IMR-90 (cell line): ENCODE measurements at regions of chr9 and their contacts with region 1.

Region 1: DNA sequence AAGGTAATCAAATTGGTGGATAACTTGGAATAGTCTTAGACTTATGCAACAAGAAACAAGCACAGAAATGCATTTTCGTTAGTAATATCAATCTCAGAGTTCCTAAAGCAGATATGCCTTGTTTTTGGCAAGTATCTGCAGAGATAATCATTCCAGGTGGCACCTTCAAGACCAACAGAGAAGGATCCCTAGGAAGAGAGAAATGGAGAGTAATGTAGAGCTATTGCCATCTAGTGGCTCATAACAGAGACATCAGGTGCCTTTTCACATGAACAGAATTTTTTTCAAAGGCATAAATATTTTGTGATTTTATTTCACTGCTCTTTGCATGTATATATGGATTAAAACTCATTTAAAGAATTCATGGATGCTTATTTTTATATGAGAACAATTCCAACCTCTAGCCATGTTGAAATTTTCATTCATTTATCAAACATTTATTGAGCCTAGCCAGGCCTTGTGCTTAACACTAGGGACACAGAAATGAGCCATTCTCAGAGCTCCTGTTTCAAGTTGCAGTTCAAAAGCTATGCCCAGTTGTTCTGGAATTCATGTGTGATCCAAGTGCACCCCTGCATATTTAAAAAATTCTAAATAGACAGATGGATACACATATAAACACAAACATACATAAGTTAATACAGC is 117.5 kb upstream of the OR13F1 start:
- DNase-seq: peak; percentile 20
- ATAC-seq: no peak
- H3K4me3 ChIP-seq: no peak overlapping the region
- H3K27ac ChIP-seq: no peak overlapping the region
- H3K4me1 ChIP-seq: no peaks in the 10 kb centered on the region
- H3K27me3 ChIP-seq: no peaks in the 10 kb centered on the region
- CTCF ChIP-seq: peak; percentile 66
- POLR2A ChIP-seq: no peak
- RAD21 ChIP-seq: peak; percentile 68

Region 2: DNA sequence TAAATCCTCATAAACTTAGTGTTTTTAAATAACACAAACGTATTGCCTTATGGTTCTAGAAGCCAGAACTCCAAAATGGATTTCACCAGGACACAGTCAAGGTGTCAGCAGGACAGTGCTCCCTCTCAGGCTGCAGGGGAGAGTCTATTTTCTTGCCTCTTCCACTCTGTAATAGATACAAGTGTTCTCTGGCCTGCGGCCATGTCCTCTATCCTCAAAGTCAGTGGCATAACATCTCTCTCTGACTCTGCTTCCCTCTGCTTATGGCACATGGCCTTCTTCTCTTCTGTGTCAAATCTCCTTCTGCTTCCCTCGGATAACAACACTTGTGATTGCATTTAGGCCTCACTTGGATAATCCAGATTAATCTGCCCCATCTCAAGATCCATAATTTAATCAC is 11.8 kb before region 1 on chr9:
- CTCF ChIA-PET with region 1: no interaction called
- POLR2A ChIA-PET with region 1: no interaction called
- dilution Hi-C with region 1: no loop called
- in situ Hi-C with region 1: no loop called
- intact Hi-C with region 1: no loop called
- DNase-seq: no peak
- ATAC-seq: no peak
- H3K4me3 ChIP-seq: no peak overlapping the region
- H3K27ac ChIP-seq: no peak overlapping the region
- H3K4me1 ChIP-seq: no peaks in the 10 kb centered on the region
- H3K27me3 ChIP-seq: no peaks in the 10 kb centered on the region
- CTCF ChIP-seq: no peak
- POLR2A ChIP-seq: no peak
- RAD21 ChIP-seq: no peak

Region 3: DNA sequence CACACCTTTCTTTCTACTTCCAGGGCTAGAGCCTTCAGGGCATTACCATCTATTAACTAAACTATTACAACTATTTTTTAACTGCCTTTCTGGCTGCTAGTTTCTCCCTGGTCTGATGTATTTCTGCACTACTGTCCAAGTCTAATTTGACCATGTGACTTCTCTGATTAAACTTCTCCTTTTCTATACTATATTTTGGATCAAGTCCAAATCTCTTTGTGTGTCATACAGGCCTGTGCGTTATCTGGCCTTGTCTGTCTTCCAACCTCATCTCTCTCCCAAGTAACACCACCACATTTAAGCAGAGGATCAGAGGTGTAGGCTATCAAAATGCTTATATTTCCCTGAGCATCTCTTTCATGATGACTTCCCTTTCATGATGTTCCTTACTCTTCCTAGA is 70.3 kb after region 1 on chr9:
- CTCF ChIA-PET with region 1: no interaction called
- POLR2A ChIA-PET with region 1: no interaction called
- dilution Hi-C with region 1: no loop called
- in situ Hi-C with region 1: no loop called
- intact Hi-C with region 1: loop called (anchors 10 kb)
- DNase-seq: no peak
- ATAC-seq: no peak
- H3K4me3 ChIP-seq: no peak overlapping the region
- H3K27ac ChIP-seq: no peak overlapping the region
- H3K4me1 ChIP-seq: no peaks in the 10 kb centered on the region
- H3K27me3 ChIP-seq: no peaks in the 10 kb centered on the region
- CTCF ChIP-seq: no peak
- POLR2A ChIP-seq: no peak
- RAD21 ChIP-seq: no peak